ENCODE measurements at regions of chr6 and their contacts with region 1.

Region 1: GRCh38 chr6:135088818-135089809 is 34.5 kb upstream of the HBS1L start:
- DNase-seq: peak; percentile 24 to 65 (median 34)
- H3K4me3 ChIP-seq: peak overlapping the region; percentile 13 to 44
- H3K4me3 Mint-ChIP-seq: peak overlapping the region; percentile 64 to 87 (median 80)
- H3K27ac ChIP-seq: no peak overlapping the region
- H3K27ac Mint-ChIP-seq: peak overlapping the region; percentile 62 to 95 (median 82)
- H3K4me1 ChIP-seq: peaks cover 61% of the 10 kb centered on the region
- H3K4me1 Mint-ChIP-seq: peaks cover 36 to 68% (median 53%) of the 10 kb centered on the region in 4 donors
- H3K27me3 ChIP-seq: no peaks in the 10 kb centered on the region
- H3K27me3 Mint-ChIP-seq: no peaks in the 10 kb centered on the region

Region 2: GRCh38 chr6:134564705-134565104 is 524.4 kb before region 1 on chr6:
- CTCF ChIA-PET with region 1: no interaction called
- POLR2A ChIA-PET with region 1: no interaction called
- intact Hi-C with region 1: no loop called
- DNase-seq: no peak
- H3K4me3 ChIP-seq: no peak overlapping the region
- H3K4me3 Mint-ChIP-seq: no peak overlapping the region
- H3K27ac ChIP-seq: no peak overlapping the region
- H3K27ac Mint-ChIP-seq: no peak overlapping the region
- H3K4me1 ChIP-seq: peaks cover 2% of the 10 kb centered on the region
- H3K4me1 Mint-ChIP-seq: peaks cover 3 to 5% (median 5%) of the 10 kb centered on the region in 4 donors
- H3K27me3 ChIP-seq: no peaks in the 10 kb centered on the region
- H3K27me3 Mint-ChIP-seq: peaks cover 0 to 2% of the 10 kb centered on the region in 2 donors

Region 3: DNA sequence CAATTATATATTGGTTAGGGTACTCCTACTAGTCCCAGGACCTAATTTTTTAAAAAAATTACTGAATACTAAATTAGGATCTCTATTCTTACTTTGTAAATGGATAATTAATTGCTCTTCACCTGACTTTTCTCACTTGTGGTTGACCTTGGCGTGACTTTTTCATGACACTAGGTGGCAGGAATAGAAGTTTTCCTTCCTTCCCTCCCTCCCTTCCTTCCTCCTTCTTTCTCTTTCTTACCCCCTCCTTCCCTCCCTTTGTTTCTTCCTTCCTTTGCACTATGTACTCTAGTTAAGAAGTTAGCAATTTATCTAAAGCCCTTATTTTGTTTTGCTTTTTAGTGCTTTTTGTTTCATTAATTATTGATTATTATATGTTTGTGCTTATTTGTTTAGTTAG is 14.1 kb before region 1 on chr6:
- CTCF ChIA-PET with region 1: interaction called, 13 read pairs
- POLR2A ChIA-PET with region 1: no interaction called
- intact Hi-C with region 1: no loop called
- DNase-seq: no peak
- H3K4me3 ChIP-seq: no peak overlapping the region
- H3K4me3 Mint-ChIP-seq: no peak overlapping the region
- H3K27ac ChIP-seq: no peak overlapping the region
- H3K27ac Mint-ChIP-seq: no peak overlapping the region
- H3K4me1 ChIP-seq: no peaks in the 10 kb centered on the region
- H3K4me1 Mint-ChIP-seq: peaks cover 0 to 4% (median 3%) of the 10 kb centered on the region in 4 donors
- H3K27me3 ChIP-seq: no peaks in the 10 kb centered on the region
- H3K27me3 Mint-ChIP-seq: peaks cover 0 to 2% of the 10 kb centered on the region in 2 donors

Region 4: GRCh38 chr6:135114355-135115145 is 25.4 kb after region 1 on chr6:
- CTCF ChIA-PET with region 1: interaction called, 15 read pairs
- POLR2A ChIA-PET with region 1: interaction called, 14 read pairs
- intact Hi-C with region 1: no loop called
- DNase-seq: no peak
- H3K4me3 ChIP-seq: no peak overlapping the region
- H3K4me3 Mint-ChIP-seq: peak overlapping the region in 5 of 8 donors; percentile 10 to 43 (median 24)
- H3K27ac ChIP-seq: no peak overlapping the region
- H3K27ac Mint-ChIP-seq: peak overlapping the region in 3 of 7 donors; percentile 6 to 38 (median 18)
- H3K4me1 ChIP-seq: peaks cover 34% of the 10 kb centered on the region
- H3K4me1 Mint-ChIP-seq: peaks cover 28 to 55% (median 36%) of the 10 kb centered on the region in 4 donors
- H3K27me3 ChIP-seq: no peaks in the 10 kb centered on the region
- H3K27me3 Mint-ChIP-seq: peaks cover 0 to 17% of the 10 kb centered on the region in 2 donors

Region 5: DNA sequence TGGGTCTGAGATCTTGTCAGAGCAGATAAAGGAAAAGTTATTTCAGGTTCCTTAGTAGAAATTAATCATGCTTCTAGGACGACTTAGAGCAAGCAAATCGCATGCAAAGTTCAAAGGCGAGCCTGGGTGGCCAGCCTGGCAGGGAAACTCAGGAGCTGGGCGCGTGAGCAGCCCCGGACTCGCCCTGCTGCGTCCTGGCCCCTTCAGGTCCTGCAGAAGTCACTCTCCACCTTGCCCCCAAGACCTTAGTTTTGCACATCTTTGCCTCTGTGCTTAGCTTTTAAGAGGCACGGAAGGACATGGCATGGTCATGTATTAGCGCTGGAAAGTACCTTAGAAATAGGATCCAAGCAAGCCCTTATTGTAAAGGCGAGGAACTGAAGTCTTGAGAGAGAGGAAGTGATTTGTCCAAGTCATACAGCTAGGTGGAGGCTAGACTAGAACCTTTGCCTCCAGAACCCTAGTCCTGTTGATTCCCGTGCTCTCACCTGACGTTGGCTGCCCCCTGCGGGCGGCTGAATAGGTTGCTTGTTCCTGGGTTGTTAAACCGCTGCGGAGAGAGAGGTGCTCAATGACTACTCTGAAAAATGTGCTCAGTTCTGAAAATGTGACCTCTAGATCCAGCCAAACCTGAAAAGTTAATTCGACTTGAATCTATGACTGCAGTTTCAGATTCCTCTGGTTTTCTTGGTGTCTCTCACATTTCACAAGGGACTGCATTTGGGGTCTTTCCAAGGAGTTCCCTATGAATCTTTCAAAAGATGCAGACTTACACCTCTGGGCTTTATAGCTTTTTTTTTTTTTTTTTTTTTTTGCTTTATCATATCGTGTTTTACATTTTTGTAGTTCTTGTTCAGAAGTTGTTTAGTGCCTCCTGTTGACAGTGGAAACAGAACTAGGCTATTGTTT is 94.7 kb after region 1 on chr6:
- CTCF ChIA-PET with region 1: interaction called, 49 read pairs
- POLR2A ChIA-PET with region 1: interaction called, 17 read pairs
- intact Hi-C with region 1: loop called (anchors 1 kb)
- DNase-seq: peak; percentile 65 to 79 (median 71)
- H3K4me3 ChIP-seq: peak overlapping the region; percentile 51 to 57
- H3K4me3 Mint-ChIP-seq: peak overlapping the region; percentile 87 to 96 (median 92)
- H3K27ac ChIP-seq: no peak overlapping the region
- H3K27ac Mint-ChIP-seq: peak overlapping the region; percentile 17 to 87 (median 57)
- H3K4me1 ChIP-seq: peaks cover 12% of the 10 kb centered on the region
- H3K4me1 Mint-ChIP-seq: peaks cover 8 to 28% (median 17%) of the 10 kb centered on the region in 4 donors
- H3K27me3 ChIP-seq: no peaks in the 10 kb centered on the region
- H3K27me3 Mint-ChIP-seq: no peaks in the 10 kb centered on the region

Region 6: DNA sequence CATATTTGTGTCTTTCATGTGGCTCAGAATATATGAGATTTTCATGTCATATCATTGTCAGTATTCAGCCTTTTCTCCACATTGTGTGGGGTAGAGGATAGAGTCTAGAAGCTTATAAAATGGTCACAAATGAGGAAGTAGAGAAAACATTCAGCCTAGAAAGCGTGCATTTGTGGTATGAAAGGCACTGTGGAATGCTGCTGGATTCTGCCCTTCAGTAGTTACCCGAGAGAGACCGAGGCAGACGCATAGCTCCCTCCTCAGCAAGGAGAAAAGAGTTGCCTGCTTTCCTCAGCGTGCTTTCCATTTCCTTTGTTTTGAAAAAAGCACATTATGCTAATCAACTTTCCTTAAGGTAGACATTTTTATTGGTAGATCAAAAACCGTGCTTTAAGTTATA is 120.7 kb after region 1 on chr6:
- CTCF ChIA-PET with region 1: no interaction called
- POLR2A ChIA-PET with region 1: no interaction called
- intact Hi-C with region 1: no loop called
- DNase-seq: peak in 4 of 5 donors; percentile 16 to 32 (median 24)
- H3K4me3 ChIP-seq: peak overlapping the region; percentile 34 to 41
- H3K4me3 Mint-ChIP-seq: peak overlapping the region; percentile 74 to 88 (median 84)
- H3K27ac ChIP-seq: no peak overlapping the region
- H3K27ac Mint-ChIP-seq: peak overlapping the region in 6 of 7 donors; percentile 65 to 91 (median 85)
- H3K4me1 ChIP-seq: peaks cover 37% of the 10 kb centered on the region
- H3K4me1 Mint-ChIP-seq: peaks cover 19 to 35% (median 28%) of the 10 kb centered on the region in 4 donors
- H3K27me3 ChIP-seq: no peaks in the 10 kb centered on the region
- H3K27me3 Mint-ChIP-seq: no peaks in the 10 kb centered on the region